Posterior vena cava (tissue), 2 donors: ENCODE measurements at regions of chr6 and their contacts with region 1.

Region 1: DNA sequence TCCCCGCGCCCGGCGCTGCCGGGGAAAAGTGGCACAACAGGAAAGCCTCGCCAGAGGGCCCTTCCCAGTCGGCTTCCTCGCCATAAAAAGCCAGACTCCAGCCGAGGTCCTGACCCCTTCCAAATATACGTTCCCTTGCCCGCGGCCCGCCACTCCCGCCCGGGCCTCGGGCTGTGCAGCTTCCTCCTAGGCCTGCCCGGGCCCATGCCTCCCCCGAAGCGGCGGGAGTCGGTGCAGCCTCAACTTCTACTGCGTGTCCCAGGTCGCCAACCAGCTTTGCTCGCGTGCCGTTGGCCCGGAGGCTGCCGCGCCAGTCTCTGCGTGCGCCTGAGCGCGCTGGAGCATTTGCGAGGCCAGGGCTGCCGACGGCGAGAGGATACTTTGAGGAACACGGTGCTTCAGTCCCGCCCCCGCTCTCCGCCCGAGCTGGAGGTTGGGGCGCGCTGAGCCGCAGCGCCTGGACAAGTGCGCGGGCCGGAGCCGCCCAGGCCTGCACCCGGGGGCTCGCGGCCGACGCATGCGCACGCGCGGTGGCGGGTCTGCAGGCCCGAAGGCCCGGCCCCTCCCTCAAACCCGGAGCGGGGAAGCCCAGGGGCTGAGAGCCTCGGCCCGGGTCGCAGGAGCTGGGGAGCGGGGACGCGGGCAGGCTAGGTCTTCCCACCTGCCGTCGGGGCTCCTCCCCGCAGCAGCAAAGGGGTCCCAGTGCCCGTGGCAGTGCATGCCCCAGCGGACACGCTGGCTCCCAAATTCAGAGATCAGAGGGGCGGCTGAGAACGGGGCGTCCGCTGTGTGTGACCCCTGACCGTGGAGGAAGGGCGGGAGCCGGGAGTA is 10.2 kb downstream of the FOXC1 start:
- DNase-seq: peak; percentile 88

Region 2: GRCh38 chr6:1562171-1562955 is 57.5 kb before region 1 on chr6:
- intact Hi-C with region 1: no loop called
- DNase-seq: no peak

Region 3: DNA sequence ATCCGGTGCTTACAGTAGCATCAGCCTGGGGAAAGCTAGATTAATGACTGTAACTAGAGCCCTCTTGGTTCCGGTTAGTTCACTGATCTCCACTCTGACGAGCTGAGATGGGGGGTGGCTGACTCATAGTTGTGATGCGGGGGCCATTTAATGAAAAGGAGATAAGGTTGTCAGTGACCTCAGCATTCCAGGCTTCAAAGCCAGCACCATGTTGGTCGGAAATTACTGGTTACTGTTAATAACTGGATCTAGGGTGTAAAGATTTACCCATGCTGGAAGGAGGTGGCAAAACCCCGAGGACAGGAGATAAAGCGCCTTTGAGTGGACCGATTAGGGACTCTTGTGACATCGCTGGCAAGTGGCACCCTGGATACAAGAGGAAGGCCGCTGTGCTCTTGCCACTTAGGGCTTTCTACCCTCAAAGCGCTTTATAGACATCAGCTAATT is 10.9 kb after region 1 on chr6:
- intact Hi-C with region 1: no loop called
- DNase-seq: peak; percentile 32

Region 4: DNA sequence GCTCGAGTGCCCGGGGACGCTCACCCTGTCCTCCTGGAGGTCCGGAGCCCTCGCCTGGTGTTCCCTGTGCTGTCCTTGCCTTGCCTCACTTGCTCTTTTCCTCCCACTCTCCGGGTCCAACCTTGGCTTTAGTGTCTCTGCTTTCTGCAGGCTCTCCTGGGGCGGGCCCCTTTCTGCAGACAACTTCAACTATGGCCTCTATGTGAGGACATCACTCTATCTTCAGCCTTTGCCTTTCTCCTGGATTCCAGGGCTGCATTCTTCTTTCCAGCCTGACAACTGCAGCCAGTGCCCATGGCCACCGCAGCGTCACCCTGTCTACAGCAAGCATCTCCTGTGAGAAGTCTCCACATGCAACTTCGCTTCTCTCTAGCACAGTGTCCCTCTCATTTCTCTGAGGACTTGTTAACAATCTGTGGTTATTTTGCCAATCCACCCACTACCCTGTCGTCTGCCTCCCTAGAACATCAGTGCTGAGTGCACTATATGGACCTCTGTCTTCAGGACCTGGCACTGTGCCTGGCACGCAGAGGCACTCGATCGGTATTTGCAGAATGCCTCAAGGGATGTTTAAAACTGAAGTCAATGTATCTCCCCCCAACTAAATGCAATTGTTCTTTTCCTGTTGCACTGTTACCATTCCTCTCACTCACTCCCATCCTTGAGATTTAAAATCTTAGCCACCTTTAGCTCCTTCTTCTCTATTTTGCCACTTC is 25.7 kb after region 1 on chr6:
- intact Hi-C with region 1: loop called in 1 of 2 experiments (anchors 1 kb)
- DNase-seq: no peak

Region 5: GRCh38 chr6:1686117-1687098 is 66.5 kb after region 1 on chr6:
- intact Hi-C with region 1: loop called (anchors 5 kb)
- DNase-seq: no peak

Region 6: DNA sequence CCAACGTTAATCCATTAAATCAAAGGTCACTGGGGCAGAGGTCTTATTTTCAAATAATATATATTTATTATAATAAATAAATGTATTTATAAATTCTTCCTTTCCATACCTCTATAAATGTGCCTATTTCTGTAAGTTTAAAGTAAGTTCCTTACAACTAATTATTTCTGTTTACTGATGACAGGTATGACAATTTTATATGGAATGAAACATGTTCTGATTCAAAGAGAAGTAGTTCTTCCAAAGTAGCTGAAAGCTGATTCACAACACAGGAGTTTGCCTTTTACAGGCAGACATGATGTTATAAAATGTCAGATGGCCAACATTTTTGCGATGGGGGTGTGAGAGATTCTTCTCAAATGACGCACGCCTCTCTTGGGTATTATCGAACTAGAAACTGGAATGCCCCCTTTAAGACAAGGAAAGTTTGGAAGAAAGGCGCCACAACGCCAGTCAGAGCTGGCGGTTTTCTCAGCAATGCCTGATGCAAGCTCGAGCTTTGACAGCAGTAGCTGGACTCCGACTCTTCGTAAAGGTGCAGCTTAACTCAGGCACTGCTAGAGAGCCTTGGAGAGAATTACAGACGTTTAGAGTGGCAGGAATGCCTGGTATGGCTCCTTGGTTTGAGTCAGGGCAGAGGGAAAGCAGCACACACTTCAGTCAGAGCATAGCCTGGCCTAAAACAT is 81.9 kb after region 1 on chr6:
- intact Hi-C with region 1: loop called (anchors 2 to 5 kb)
- DNase-seq: peak; percentile 82

Region 7: DNA sequence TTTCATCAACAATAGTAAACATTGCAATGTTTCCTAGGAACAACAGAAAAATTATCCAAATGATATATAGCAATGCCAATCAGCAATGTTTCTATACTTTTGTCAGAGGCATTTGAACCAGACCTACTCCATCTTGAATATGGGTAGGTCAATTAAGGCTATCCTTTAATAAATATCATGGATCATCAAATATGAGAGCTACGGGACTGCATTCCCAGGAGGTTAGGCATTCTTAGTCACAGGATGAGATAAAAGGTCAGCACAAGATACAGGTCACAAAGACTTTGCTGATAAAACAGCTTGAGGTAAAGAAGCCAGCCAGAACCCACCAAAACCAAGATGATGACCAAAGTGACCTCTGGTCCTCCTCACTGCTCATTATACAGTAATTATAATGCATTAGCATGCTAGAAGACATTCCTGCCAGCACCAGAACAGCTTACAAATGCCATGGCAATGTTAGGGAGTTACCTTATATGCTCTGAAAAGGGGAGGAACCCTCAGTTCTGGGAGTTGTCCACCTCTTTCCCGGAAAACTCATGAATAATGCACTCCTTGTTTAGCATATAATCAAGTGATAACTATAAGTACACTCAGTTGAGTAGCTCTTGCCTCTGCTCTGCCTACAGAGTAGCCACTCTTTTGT is 1360.1 kb after region 1 on chr6:
- intact Hi-C with region 1: loop called in 1 of 2 experiments (anchors 5 kb)
- DNase-seq: no peak